ENCODE measurements at regions of chr2 and their contacts with region 1.

Region 1: DNA sequence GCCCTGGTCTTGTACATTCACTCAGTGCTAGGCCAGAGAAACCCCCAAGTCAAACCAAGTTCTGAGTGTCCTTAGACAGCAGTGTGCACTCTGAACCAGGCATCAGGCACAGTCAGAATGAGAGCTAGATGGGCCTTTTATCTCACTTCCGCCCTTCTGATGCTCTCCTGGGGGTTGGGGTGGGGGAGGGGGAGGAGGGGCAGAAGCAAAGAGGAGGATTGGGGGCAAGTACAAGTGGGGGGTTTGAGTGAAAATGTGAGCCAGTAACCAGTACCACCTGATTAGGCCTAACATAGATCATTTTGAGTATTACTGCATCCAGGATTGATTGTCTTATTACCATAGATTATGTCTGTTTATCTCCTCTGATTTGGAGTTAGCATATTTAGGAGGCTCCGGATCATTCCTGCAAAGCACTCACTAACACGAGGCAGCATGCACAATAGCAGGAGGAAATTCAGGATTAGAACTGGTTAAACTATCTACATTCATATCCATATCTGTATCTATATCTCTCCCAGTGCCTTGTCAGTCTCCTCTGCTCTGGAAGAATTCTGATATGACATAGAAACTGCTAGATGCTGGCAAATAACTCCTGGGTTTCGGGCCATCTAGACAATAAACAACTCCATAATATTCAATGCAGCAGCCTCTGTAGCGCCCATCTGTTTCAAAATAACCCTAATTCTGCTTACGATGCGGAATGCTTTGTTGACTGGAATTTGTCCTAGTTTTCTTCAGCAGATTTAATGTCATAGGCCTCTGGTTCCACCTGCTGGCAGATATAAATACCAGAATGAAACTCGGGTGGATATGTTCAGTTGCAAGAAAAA is 149.1 kb downstream of the RHBDD1 start:
- DNase-seq: peak in 4 of 10 donors; percentile 21 to 63 (median 57)
- H3K4me3 ChIP-seq: peak overlapping the region in 23 of 59 donors; percentile 1 to 50 (median 24)
- H3K27ac ChIP-seq: peak overlapping the region in 57 of 59 donors; percentile 10 to 91 (median 78)
- H3K27me3 ChIP-seq: no peaks in the 10 kb centered on the region
- CTCF ChIP-seq: peak; percentile 63 to 96 (median 86)

Region 2: DNA sequence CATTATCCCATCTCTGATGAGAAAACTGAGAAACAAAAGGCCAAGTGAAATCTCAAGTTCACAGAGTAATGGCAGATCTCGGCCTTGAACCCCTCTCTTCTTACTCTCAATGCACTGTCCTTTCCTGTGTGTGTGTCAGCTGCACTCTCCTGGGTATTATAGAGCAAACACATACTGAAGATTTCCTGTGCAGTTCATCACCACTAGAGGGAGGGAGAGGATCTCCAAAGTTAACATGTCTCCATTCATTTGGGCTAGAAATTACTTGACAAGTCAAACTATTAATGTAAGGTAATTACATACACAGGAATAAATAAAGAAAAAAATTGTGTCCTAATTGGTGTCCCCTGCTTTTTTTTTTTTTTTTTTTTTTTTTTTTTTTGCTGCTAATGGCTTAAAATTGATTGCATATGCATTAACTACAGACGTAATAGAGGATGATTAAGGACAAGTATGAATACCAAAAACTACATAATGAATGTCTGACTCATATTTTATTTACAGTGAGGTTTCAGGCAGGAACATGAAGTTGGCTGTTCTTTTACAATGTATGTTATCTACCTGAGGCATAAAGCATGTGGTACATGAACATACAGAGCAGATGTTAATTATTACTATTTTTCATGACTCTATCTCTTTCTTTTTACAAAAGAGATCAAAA is 1316.2 kb before region 1 on chr2:
- intact Hi-C with region 1: loop called (anchors 5 kb)
- DNase-seq: peak in 1 of 10 donors; percentile 11
- H3K4me3 ChIP-seq: no peak overlapping the region
- H3K27ac ChIP-seq: no peak overlapping the region
- H3K27me3 ChIP-seq: no peaks in the 10 kb centered on the region
- CTCF ChIP-seq: peak; percentile 54 to 86 (median 73)

Region 3: GRCh38 chr2:225889446-225889850 is 1095.5 kb before region 1 on chr2:
- intact Hi-C with region 1: loop called (anchors 5 to 10 kb)
- DNase-seq: no peak
- H3K4me3 ChIP-seq: no peak overlapping the region
- H3K27ac ChIP-seq: no peak overlapping the region
- H3K27me3 ChIP-seq: no peaks in the 10 kb centered on the region
- CTCF ChIP-seq: peak; percentile 62 to 96 (median 78)

Region 4: GRCh38 chr2:226813148-226813701 is 171.7 kb before region 1 on chr2:
- intact Hi-C with region 1: loop called (anchors 1 to 5 kb)
- DNase-seq: no peak
- H3K4me3 ChIP-seq: no peak overlapping the region
- H3K27ac ChIP-seq: no peak overlapping the region
- H3K27me3 ChIP-seq: no peaks in the 10 kb centered on the region
- CTCF ChIP-seq: peak in 55 of 56 donors; percentile 27 to 82 (median 59)

Region 5: DNA sequence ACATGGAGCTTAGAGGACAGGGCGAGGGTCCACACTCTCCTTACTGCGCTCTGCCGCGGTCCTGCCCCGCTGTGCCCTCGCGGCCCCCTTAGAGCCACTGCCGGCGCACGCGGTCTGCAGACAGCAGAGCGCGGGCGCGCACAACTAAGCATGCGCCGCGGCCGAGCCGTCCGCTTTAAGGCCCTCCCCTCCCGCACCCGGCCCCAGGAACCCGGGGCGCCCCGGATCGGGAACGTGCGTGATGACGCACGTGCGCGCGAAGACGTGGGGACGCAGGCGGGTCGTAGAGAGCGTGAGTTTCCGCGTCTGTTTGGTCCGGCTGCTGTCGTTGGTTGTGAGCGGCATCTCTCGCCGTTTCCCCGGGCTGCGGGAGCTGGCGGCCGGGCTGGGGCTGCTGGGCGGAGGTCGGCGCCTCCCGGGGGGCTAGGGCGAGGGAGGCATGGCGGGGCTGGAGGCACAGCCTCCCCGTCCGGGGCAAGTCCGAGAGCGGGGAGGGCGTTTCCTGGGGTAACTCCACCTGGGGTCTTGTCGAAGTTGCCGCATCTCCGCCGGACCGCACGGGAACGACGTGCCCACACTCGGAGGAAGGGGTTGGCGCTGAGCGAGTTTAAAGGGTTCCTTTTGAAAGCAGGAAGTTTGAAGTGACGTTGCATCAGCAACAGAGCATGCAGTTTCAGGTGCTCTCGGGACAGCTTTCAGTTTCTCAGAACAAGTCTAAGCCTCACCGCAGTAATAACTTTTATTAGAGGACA is 149.0 kb before region 1 on chr2 and contains the start of gene RHBDD1:
- intact Hi-C with region 1: loop called in 1 of 2 experiments (anchors 2 kb)
- DNase-seq: peak; percentile 85 to 97 (median 94)
- H3K4me3 ChIP-seq: peak within 1 kb of the TSS; percentile 60 to 99 (median 85)
- H3K27ac ChIP-seq: peak within 1 kb of the TSS; percentile 41 to 96 (median 90)
- H3K27me3 ChIP-seq: no peaks in the 10 kb centered on the region
- CTCF ChIP-seq: peak in 38 of 56 donors; percentile 3 to 59 (median 35)
- total RNA-seq, gene RHBDD1: 36.7 to 99.9 (median 61.0) TPM

Region 6: GRCh38 chr2:226971084-226971483 is 13.9 kb before region 1 on chr2:
- intact Hi-C with region 1: no loop called
- DNase-seq: no peak
- H3K4me3 ChIP-seq: no peak overlapping the region
- H3K27ac ChIP-seq: no peak overlapping the region
- H3K27me3 ChIP-seq: no peaks in the 10 kb centered on the region
- CTCF ChIP-seq: no peak

Region 7: DNA sequence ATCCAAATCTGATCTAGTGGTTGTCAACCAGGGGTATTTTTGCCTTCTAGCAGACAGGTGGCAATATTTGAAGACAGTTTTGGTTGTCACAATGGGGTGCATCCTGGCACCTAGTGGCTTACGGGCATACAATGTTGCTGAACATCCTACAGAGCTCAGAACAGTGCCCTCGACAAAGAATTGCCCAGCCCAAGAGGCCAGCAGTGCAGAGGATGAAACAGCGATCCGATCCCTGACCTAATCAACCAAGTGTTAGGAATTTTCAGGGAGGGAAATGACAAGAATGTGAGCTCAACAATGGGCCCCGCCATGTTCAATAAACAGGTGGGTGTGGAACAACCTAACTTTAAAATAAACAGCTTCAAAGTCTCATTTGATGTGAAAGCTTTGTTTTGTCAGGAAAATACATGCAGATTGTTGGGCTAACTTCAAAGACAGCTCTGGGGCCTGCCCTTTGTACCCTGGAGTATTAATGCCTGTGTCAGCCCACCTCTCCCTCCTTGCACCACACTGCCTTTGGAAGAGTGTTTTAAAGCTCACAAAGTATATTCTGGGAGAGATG is 659.1 kb after region 1 on chr2:
- intact Hi-C with region 1: no loop called
- DNase-seq: no peak
- H3K4me3 ChIP-seq: no peak overlapping the region
- H3K27ac ChIP-seq: peak overlapping the region in 15 of 59 donors; percentile 4 to 56 (median 26)
- H3K27me3 ChIP-seq: no peaks in the 10 kb centered on the region
- CTCF ChIP-seq: peak in 1 of 56 donors; percentile 7